ENCODE measurements at regions of chr3 and their contacts with region 1.

Region 1: DNA sequence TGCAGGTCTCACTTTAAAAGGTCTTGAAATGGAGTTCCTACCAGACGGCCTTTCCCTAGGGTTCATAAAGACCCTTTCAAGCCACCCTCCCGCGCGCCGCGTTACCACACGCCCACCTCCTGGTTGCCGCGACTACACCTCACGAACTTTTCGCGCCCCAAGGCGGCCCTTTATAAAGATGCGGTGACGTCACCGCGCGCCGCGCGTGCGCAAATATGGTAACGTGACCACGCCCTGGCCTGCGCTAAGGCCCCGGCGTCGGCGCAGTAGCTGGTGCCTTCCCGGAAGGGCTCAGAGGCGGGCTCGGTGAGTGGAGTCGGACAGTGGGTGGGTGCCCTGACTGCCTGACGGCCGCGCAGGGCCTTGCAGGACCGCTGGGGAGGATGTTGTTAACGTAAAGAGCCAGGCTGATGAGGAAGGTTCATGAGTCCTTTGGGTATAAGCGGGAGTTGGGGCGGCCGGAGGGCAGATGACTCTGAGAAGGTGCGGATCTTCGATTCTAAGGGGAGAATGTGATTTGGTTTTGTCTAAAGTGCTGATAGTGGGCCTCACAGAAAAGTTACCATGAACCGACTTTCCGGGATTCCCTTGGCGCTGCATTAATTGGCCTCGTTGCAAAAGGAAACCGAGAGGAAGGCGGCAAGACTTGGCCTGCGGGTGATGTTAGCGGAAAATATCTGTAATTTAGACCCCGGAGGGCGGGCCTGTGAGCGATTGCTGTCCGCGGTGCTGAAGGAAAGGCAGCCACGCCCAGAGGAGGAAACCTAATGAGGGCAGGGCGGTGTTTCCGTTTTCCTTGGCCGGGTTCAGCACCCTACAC is 54.4 kb downstream of the FEZF2 start:
- DNase-seq: peak; percentile 82 to 85
- ATAC-seq: peak; percentile 99 to 100 (median 99)
- H3K4me3 ChIP-seq: peak overlapping the region; percentile 40 to 76 (median 60)
- H3K27ac ChIP-seq: peak overlapping the region in 9 of 10 donors; percentile 15 to 83 (median 67)
- H3K4me1 ChIP-seq: peaks cover 0 to 12% (median 4%) of the 10 kb centered on the region in 9 donors
- H3K27me3 ChIP-seq: peaks cover 0 to 10% (median 0%) of the 10 kb centered on the region in 7 donors
- CTCF ChIP-seq: no peak

Region 2: GRCh38 chr3:62201438-62202035 is 117.4 kb before region 1 on chr3:
- intact Hi-C with region 1: loop called in 2 of 10 experiments (anchors 10 kb)
- DNase-seq: no peak
- ATAC-seq: peak in 1 of 8 donors; percentile 27
- H3K4me3 ChIP-seq: no peak overlapping the region
- H3K27ac ChIP-seq: no peak overlapping the region
- H3K4me1 ChIP-seq: no peaks in the 10 kb centered on the region
- H3K27me3 ChIP-seq: no peaks in the 10 kb centered on the region
- CTCF ChIP-seq: peak; percentile 24 to 70 (median 58)

Region 3: GRCh38 chr3:62211675-62212429 is 107.1 kb before region 1 on chr3:
- intact Hi-C with region 1: loop called in 3 of 10 experiments (anchors 5 to 10 kb)
- DNase-seq: no peak
- ATAC-seq: no peak
- H3K4me3 ChIP-seq: no peak overlapping the region
- H3K27ac ChIP-seq: no peak overlapping the region
- H3K4me1 ChIP-seq: no peaks in the 10 kb centered on the region
- H3K27me3 ChIP-seq: no peaks in the 10 kb centered on the region
- CTCF ChIP-seq: no peak

Region 4: GRCh38 chr3:63228087-63229023 is 909.4 kb after region 1 on chr3:
- intact Hi-C with region 1: loop called in 1 of 10 experiments (anchors 10 kb)
- DNase-seq: peak in 1 of 2 donors; percentile 5
- ATAC-seq: peak in 1 of 8 donors; percentile 47
- H3K4me3 ChIP-seq: peak overlapping the region in 1 of 10 donors; percentile 18
- H3K27ac ChIP-seq: no peak overlapping the region
- H3K4me1 ChIP-seq: no peaks in the 10 kb centered on the region
- H3K27me3 ChIP-seq: no peaks in the 10 kb centered on the region
- CTCF ChIP-seq: peak in 8 of 9 donors; percentile 32 to 65 (median 52)